ENCODE measurements at regions of chr18 and their contacts with region 1.

Region 1: GRCh38 chr18:48059455-48060010 is 129.1 kb upstream of the SMAD2 start:
- DNase-seq: no peak
- H3K4me3 ChIP-seq: no peak overlapping the region
- H3K27ac ChIP-seq: peak overlapping the region in 1 of 2 donors; percentile 52
- H3K4me1 ChIP-seq: no peaks in the 10 kb centered on the region
- H3K27me3 ChIP-seq: no peaks in the 10 kb centered on the region
- CTCF ChIP-seq: no peak
- POLR2A ChIP-seq: no peak

Region 2: GRCh38 chr18:46374863-46375262 is 1684.7 kb before region 1 on chr18:
- intact Hi-C with region 1: no loop called
- DNase-seq: peak; percentile 39 to 75
- H3K4me3 ChIP-seq: no peak overlapping the region
- H3K27ac ChIP-seq: no peak overlapping the region
- H3K4me1 ChIP-seq: no peaks in the 10 kb centered on the region
- H3K27me3 ChIP-seq: no peaks in the 10 kb centered on the region
- CTCF ChIP-seq: no peak
- POLR2A ChIP-seq: no peak

Region 3: GRCh38 chr18:48046843-48047242 is 12.7 kb before region 1 on chr18:
- intact Hi-C with region 1: loop called (anchors 1 kb)
- DNase-seq: no peak
- H3K4me3 ChIP-seq: no peak overlapping the region
- H3K27ac ChIP-seq: peak overlapping the region in 1 of 2 donors; percentile 5
- H3K4me1 ChIP-seq: no peaks in the 10 kb centered on the region
- H3K27me3 ChIP-seq: no peaks in the 10 kb centered on the region
- CTCF ChIP-seq: no peak
- POLR2A ChIP-seq: no peak

Region 4: DNA sequence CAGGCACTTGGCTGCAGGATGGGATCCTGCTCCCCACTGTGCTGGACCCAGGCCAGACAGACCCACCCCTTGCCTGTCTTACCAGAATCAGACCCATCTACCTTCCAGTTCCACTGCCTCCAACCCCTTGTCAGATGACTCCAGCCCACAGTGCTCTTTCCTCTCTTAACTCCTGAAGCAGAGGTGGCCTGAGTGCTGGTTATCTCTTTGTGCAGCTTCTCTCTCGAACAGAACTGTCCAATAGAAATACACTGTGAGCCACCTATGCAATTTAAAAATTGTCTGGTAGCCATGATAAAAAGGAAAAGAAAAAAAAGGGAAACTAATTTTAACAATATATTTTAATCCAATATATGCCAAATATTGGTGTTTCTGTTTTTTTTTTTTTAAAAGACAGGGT is 31.2 kb after region 1 on chr18:
- intact Hi-C with region 1: loop called (anchors 1 kb)
- DNase-seq: no peak
- H3K4me3 ChIP-seq: no peak overlapping the region
- H3K27ac ChIP-seq: no peak overlapping the region
- H3K4me1 ChIP-seq: no peaks in the 10 kb centered on the region
- H3K27me3 ChIP-seq: no peaks in the 10 kb centered on the region
- CTCF ChIP-seq: no peak
- POLR2A ChIP-seq: no peak